ENCODE measurements at regions of chr4 and their contacts with region 1.

Region 1: DNA sequence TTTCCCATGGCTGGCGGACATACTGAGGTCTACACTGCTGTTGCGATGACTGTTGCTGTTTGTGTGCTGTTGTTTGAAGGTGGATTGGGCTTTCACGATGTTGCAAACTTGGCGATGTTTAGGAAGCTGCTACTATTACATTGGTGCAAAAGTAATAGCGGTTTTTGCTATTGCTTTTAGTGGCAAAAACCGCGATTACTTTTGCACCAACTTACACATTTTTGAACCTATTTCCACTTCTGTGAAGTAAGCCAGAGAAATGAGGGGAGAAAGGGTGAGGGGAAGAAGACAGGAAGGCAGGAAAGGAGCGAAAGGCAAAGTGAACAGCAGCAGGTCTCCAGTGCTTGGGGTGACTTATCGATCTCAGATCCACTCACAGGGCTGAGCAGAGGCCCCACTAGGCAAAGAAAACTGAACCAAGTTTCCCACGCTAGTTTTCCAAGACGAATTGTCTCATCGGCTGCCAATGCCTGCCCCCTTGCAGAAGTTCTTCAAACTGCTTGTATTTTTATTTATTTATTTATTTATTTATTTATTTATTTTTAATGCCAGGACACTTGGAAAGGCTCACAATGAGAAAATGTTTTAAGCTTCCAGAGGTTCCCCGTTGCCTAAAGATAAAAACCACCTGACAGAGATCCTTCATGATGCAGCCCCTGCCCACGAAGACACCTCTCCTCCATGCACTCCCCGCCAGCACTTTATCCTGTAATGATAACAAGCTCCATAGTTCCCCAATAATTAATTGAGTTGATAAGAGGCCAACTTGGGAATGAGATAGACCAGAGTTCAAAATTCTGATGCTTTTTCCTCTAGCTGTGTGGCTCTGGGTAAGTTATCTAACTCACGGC is 43.3 kb downstream of the QDPR start:
- DNase-seq: peak in 1 of 5 donors; percentile 27
- ATAC-seq: no peak
- H3K4me3 ChIP-seq: no peak overlapping the region
- H3K27ac ChIP-seq: no peak overlapping the region
- H3K4me1 ChIP-seq: peaks cover 0 to 6% (median 0%) of the 10 kb centered on the region in 12 donors
- H3K27me3 ChIP-seq: no peaks in the 10 kb centered on the region
- CTCF ChIP-seq: peak; percentile 33 to 70 (median 54)
- POLR2A ChIP-seq: no peak

Region 2: GRCh38 chr4:17347445-17347844 is 121.2 kb before region 1 on chr4:
- intact Hi-C with region 1: loop called in 5 of 10 experiments (anchors 5 to 10 kb)
- DNase-seq: no peak
- ATAC-seq: peak in 2 of 4 donors; percentile 18 to 41
- H3K4me3 ChIP-seq: no peak overlapping the region
- H3K27ac ChIP-seq: no peak overlapping the region
- H3K4me1 ChIP-seq: no peaks in the 10 kb centered on the region
- H3K27me3 ChIP-seq: no peaks in the 10 kb centered on the region
- CTCF ChIP-seq: peak; percentile 17 to 64 (median 42)
- POLR2A ChIP-seq: no peak

Region 3: GRCh38 chr4:17356926-17357325 is 111.7 kb before region 1 on chr4:
- intact Hi-C with region 1: loop called in 2 of 10 experiments (anchors 5 to 10 kb)
- DNase-seq: no peak
- ATAC-seq: no peak
- H3K4me3 ChIP-seq: no peak overlapping the region
- H3K27ac ChIP-seq: no peak overlapping the region
- H3K4me1 ChIP-seq: no peaks in the 10 kb centered on the region
- H3K27me3 ChIP-seq: peaks cover 0 to 7% (median 0%) of the 10 kb centered on the region in 9 donors
- CTCF ChIP-seq: no peak
- POLR2A ChIP-seq: no peak